ENCODE measurements at regions of chr15 and their contacts with region 1.

Region 1: DNA sequence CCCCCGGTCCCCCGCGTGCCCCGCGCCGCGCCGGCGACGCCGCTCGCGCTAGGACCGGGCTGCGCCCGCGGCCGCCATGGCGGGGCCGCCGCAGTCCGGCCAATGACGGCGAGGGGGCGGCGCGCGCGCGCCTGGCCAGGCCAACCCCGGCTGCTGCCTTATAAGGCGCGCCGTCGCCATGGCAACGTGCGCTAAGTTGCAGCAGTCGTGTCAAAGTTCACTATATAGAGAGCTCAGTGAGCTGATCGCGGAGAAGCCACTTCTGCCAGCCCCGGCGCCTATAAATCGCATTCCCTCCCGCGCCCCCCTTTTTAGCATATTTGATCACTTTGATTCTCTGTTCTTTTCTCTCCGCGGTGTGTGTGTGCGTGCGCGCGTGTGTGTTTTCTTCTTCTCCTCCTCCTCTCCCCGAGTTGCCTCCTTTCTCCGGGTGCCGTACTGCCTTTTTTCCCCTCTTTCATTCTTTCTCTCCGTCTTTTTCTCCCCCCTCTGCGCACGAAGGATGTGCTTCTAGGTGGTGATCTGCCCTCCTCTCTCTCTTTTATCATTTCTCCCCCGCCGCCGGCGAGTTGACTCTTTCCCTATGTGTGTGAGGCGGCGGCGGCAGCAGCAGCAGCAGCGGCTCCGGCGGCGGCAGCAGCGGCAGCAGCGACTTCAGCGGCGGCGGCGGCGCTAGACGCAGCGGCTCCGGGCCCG is at the start of gene NR2F2:
- DNase-seq: peak; percentile 66
- H3K4me3 Mint-ChIP-seq: peak within 1 kb of the TSS; percentile 77
- H3K27ac Mint-ChIP-seq: no peak within 1 kb of the TSS
- H3K4me1 Mint-ChIP-seq: peaks cover 28% of the 10 kb centered on the region
- H3K27me3 Mint-ChIP-seq: peaks cover 79% of the 10 kb centered on the region
- total RNA-seq, gene NR2F2: not detected

Region 2: GRCh38 chr15:95215017-95215416 is 1115.6 kb before region 1 on chr15:
- CTCF ChIA-PET with region 1: no interaction called
- intact Hi-C with region 1: no loop called
- DNase-seq: no peak
- H3K4me3 Mint-ChIP-seq: no peak overlapping the region
- H3K27ac Mint-ChIP-seq: no peak overlapping the region
- H3K4me1 Mint-ChIP-seq: no peaks in the 10 kb centered on the region
- H3K27me3 Mint-ChIP-seq: peaks cover 18% of the 10 kb centered on the region

Region 3: GRCh38 chr15:96303503-96304056 is 27.0 kb before region 1 on chr15:
- CTCF ChIA-PET with region 1: no interaction called
- intact Hi-C with region 1: no loop called
- DNase-seq: no peak
- H3K4me3 Mint-ChIP-seq: no peak overlapping the region
- H3K27ac Mint-ChIP-seq: no peak overlapping the region
- H3K4me1 Mint-ChIP-seq: no peaks in the 10 kb centered on the region
- H3K27me3 Mint-ChIP-seq: peaks cover 19% of the 10 kb centered on the region

Region 4: GRCh38 chr15:96345560-96346399 is 15.2 kb after region 1 on chr15:
- CTCF ChIA-PET with region 1: no interaction called
- intact Hi-C with region 1: loop called (anchors 1 kb)
- DNase-seq: peak; percentile 27
- H3K4me3 Mint-ChIP-seq: no peak overlapping the region
- H3K27ac Mint-ChIP-seq: no peak overlapping the region
- H3K4me1 Mint-ChIP-seq: peaks cover 18% of the 10 kb centered on the region
- H3K27me3 Mint-ChIP-seq: peaks cover 91% of the 10 kb centered on the region

Region 5: GRCh38 chr15:96893159-96893906 is 562.7 kb after region 1 on chr15:
- CTCF ChIA-PET with region 1: no interaction called
- intact Hi-C with region 1: loop called (anchors 1 kb)
- DNase-seq: peak; percentile 6
- H3K4me3 Mint-ChIP-seq: no peak overlapping the region
- H3K27ac Mint-ChIP-seq: no peak overlapping the region
- H3K4me1 Mint-ChIP-seq: peaks cover 13% of the 10 kb centered on the region
- H3K27me3 Mint-ChIP-seq: peaks cover 3% of the 10 kb centered on the region

Region 6: GRCh38 chr15:97234851-97235610 is 904.4 kb after region 1 on chr15:
- CTCF ChIA-PET with region 1: no interaction called
- intact Hi-C with region 1: loop called (anchors 2 kb)
- DNase-seq: peak; percentile 55
- H3K4me3 Mint-ChIP-seq: no peak overlapping the region
- H3K27ac Mint-ChIP-seq: no peak overlapping the region
- H3K4me1 Mint-ChIP-seq: peaks cover 2% of the 10 kb centered on the region
- H3K27me3 Mint-ChIP-seq: peaks cover 20% of the 10 kb centered on the region

Measured in activated naive CD4-positive, alpha-beta T cell treated with anti-CD3 and anti-CD28 coated beads for 36 hours (primary cell).